Breast epithelium (tissue), 4 donors: ENCODE measurements at regions of chr14 and their contacts with region 1.

Region 1: GRCh38 chr14:83533734-83534133 is 1996.2 kb upstream of the FLRT2 start:
- DNase-seq: no peak
- H3K4me3 ChIP-seq: no peak overlapping the region
- H3K27ac ChIP-seq: no peak overlapping the region
- H3K4me1 ChIP-seq: no peaks in the 10 kb centered on the region
- H3K27me3 ChIP-seq: no peaks in the 10 kb centered on the region
- CTCF ChIP-seq: no peak
- POLR2A ChIP-seq: no peak

Region 2: GRCh38 chr14:81890020-81890419 is 1643.7 kb before region 1 on chr14:
- intact Hi-C with region 1: loop called (anchors 5 kb)
- DNase-seq: no peak
- H3K4me3 ChIP-seq: no peak overlapping the region
- H3K27ac ChIP-seq: no peak overlapping the region
- H3K4me1 ChIP-seq: peaks cover 0 to 4% of the 10 kb centered on the region in 2 donors
- H3K27me3 ChIP-seq: no peaks in the 10 kb centered on the region
- CTCF ChIP-seq: no peak
- POLR2A ChIP-seq: no peak